PC-9 (cell line): ENCODE measurements at regions of chr10 and their contacts with region 1.

Region 1: DNA sequence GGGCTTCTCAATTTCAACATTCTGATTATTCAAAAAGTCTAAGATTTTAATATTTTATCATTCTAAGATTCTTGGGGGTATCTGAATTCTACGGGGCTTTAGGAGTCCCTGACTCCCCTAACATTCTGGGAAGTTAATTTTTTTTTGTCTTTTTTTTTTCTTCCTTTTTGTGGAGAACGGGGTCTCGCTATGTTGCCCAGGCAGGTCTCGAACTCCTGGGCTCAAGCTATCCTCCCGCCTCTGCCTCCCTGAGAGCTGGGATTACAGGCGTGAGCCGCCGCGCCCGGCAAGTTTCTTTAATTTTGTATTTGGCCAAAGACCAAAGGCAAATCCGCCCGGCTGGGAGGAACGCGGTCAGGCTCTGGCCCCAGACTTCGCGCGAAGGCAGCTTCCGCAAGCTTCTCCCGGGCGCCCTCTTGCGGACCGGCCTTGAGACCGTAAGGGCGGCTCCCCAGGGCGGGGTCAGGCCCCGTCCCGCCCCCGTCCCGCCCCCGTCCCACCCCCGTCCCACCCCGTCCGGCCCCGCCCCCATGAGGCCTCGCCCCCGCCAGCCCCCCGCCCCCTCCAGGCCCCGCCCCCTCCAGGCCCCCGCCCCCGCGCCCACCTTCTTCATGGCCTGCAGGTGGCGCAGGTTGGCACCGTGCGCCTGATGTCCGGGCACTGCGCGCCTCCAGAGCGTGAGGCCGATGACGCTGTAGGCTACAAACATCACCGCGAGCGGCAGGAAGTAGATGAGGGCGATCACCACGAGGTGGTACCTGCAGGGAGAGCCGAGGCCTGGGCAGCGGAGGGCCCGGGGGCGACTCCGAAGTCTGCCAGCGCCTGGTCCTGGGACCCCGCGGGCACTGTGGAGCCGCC is 8.2 kb downstream of the TACR2 start:
- DNase-seq: peak; percentile 85 to 96
- H3K4me3 ChIP-seq: peak overlapping the region; percentile 50; the same call in 1 of the 2 replicates
- H3K27ac ChIP-seq: no peak overlapping the region
- H3K4me1 ChIP-seq: peaks cover 26% of the 10 kb centered on the region
- H3K27me3 ChIP-seq: no peaks in the 10 kb centered on the region
- CTCF ChIP-seq: peak; percentile 54

Region 2: DNA sequence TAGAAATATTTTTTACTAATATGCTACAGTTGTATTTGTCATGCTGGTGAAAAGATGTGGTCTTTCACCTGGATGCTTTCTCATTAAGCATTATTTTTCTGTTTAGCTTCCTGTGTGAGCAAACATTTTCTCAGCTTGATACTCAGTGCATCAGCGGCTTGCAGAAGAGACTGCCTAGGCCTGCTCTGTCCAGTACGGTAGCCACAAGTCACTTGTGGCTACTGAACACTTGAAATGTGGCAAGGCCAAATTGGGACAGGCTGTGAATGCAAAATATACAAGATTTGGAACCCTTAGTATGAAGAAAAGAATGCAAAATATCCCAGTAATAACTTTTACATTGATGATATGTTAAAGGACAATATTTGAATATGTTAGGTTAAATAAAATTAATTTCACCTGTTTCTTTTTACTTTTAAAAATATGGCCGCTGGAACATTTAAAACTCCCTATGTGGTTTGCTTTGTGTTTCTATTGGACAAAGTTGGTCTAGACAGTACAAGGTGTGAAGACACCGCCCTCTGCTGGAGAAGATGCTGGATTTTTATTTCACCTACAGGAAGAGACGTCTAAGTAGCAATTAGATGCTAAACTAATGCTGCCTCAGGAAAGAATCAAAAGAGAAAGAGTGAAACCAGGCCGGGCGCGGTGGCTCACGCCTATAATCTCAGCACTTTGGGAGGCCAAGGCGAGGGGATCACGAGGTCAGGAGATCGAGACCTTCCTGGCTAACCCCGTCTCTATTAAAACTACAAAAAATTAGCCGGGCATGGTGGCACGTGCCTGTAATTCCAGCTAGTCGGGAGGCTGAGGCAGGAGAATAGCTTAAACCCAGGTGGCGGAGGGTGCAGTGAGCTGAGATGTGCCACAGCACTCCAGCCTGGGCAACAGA is 315.3 kb before region 1 on chr10:
- CTCF ChIA-PET with region 1: no interaction called
- POLR2A ChIA-PET with region 1: no interaction called
- intact Hi-C with region 1: loop called (anchors 5 kb)
- DNase-seq: peak; percentile 73 to 77
- H3K4me3 ChIP-seq: no peak overlapping the region
- H3K27ac ChIP-seq: no peak overlapping the region
- H3K4me1 ChIP-seq: peaks cover 7% of the 10 kb centered on the region; the same call in 1 of the 2 replicates
- H3K27me3 ChIP-seq: no peaks in the 10 kb centered on the region
- CTCF ChIP-seq: peak; percentile 94

Region 3: GRCh38 chr10:69141304-69141703 is 267.2 kb before region 1 on chr10:
- CTCF ChIA-PET with region 1: interaction called, 10 read pairs
- POLR2A ChIA-PET with region 1: no interaction called
- intact Hi-C with region 1: no loop called
- DNase-seq: no peak
- H3K4me3 ChIP-seq: no peak overlapping the region
- H3K27ac ChIP-seq: no peak overlapping the region
- H3K4me1 ChIP-seq: no peaks in the 10 kb centered on the region
- H3K27me3 ChIP-seq: no peaks in the 10 kb centered on the region
- CTCF ChIP-seq: 0 out of 2 replicates have a peak, but pooled peaks have one; percentile 21

Region 4: DNA sequence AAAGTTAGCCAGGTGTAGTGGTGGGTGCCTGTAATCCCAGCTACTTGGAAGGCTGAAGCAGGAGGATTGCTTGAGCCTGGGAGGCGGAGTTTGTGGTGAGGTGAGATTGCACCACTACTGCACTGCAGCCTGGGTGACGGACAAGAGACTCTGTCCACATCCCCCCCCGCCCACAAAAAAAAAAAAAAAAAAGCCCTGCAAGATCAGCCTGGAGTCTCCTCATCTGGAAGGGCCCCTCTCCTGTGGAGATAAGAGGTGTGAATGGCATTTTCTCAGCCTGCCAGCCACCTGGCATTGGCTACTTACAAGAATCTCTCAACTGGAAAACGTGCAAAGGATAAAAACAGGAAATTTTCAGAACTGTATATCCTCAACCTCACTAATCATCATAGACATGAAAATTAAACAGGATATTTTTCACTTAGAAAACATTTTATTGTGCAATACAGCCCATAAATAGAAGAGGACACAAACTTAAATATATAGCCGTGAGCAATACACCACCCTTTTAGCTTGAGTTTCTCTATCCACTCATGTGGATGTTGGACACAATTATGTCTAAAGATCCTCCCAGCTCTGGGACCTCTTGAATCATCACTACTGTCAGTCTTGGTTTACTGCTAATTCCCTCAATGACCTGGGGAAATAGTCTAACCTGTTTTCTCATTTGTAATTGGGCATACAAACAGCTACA is 31.4 kb after region 1 on chr10:
- CTCF ChIA-PET with region 1: no interaction called
- POLR2A ChIA-PET with region 1: no interaction called
- intact Hi-C with region 1: loop called (anchors 1 kb)
- DNase-seq: peak; percentile 81 to 96
- H3K4me3 ChIP-seq: peak overlapping the region; percentile 42; the same call in 1 of the 2 replicates
- H3K27ac ChIP-seq: peak overlapping the region; percentile 96
- H3K4me1 ChIP-seq: peaks cover 69% of the 10 kb centered on the region
- H3K27me3 ChIP-seq: no peaks in the 10 kb centered on the region
- CTCF ChIP-seq: 0 out of 2 replicates have a peak, but pooled peaks have one; percentile 4

Region 5: GRCh38 chr10:69515699-69516259 is 107.2 kb after region 1 on chr10:
- CTCF ChIA-PET with region 1: interaction called, 9 read pairs
- POLR2A ChIA-PET with region 1: no interaction called
- intact Hi-C with region 1: loop called (anchors 1 kb)
- DNase-seq: peak; percentile 57 to 74
- H3K4me3 ChIP-seq: no peak overlapping the region
- H3K27ac ChIP-seq: no peak overlapping the region
- H3K4me1 ChIP-seq: no peaks in the 10 kb centered on the region
- H3K27me3 ChIP-seq: no peaks in the 10 kb centered on the region
- CTCF ChIP-seq: peak; percentile 95

Region 6: DNA sequence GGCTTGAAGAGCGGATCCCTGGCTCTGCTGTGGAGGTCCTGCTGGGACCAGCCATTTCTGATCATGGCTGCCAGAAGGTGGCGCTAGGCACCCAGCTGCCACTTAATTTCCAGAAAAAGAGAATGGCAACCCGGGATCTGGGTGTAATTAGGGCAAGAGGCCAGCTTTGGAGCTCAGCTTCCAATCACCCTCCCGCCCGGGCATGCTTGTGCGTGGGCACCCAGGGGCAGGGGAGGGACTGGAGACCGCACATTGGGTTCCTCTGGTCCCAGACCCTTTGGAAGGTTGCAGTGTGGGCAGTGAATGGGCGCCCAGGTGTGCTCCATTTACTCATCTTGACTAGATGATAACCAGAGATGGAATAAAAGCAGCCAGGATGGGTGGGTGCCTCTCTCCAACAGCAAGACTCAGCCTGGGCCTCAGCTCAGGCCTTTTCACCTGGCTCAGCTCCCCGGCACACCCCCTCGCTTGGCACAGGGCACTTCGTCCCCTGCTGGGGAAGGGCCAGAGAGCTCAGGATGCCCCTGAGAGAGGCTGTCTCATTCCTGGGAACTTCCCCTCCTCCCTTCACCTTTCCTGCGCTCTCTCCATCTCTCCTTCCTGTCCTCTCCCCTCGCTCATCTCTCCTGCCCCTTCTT is 236.2 kb after region 1 on chr10:
- CTCF ChIA-PET with region 1: interaction called, 10 read pairs
- POLR2A ChIA-PET with region 1: no interaction called
- intact Hi-C with region 1: loop called (anchors 1 kb)
- DNase-seq: peak; percentile 46 to 68
- H3K4me3 ChIP-seq: no peak overlapping the region
- H3K27ac ChIP-seq: no peak overlapping the region
- H3K4me1 ChIP-seq: peaks cover 10% of the 10 kb centered on the region
- H3K27me3 ChIP-seq: peaks cover 35% of the 10 kb centered on the region
- CTCF ChIP-seq: peak; percentile 95